Naive thymus-derived CD4-positive, alpha-beta T cell (primary cell): ENCODE measurements at regions of chr11 and their contacts with region 1.

Region 1: DNA sequence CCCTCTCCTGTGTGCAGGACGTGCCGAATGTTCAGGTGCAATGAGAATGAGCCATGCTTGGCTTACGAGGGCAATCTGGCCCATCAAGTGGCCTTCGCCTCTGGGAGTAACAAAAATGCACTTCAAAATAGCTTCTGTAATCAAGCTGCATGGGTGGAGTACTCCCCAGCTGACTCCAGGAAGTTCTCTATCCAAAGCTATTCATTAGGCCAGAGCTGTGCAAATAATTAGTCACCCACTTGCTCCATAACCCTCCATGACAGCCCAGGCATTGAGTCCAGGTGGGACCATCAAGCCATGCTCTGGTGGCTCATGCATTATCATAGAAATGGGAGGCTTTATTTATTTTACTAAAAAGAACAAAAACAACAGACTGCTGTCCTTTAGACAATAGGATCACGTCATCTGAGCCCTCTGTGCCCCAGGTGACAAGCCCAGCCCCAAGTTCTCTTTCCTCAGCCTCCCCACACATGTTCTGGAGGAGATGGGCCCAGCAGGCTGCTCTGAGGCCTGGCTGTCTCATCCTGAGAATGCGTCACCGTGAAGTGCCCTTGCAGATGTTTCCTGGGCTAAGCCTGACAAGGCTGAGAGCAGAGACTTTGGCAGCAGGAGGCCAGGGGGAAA is 244.7 kb downstream of the ETS1 start:
- DNase-seq: peak in 5 of 9 donors; percentile 46 to 77 (median 63)
- ATAC-seq: peak; percentile 54
- H3K4me3 ChIP-seq: peak overlapping the region; percentile 57
- H3K4me3 Mint-ChIP-seq: peak overlapping the region; percentile 74 to 90 (median 84)
- H3K27ac ChIP-seq: peak overlapping the region; percentile 93
- H3K27ac Mint-ChIP-seq: peak overlapping the region; percentile 97 to 99 (median 99)
- H3K4me1 ChIP-seq: peaks cover 50 to 64% of the 10 kb centered on the region in 2 donors
- H3K4me1 Mint-ChIP-seq: peaks cover 52 to 99% (median 94%) of the 10 kb centered on the region in 7 donors
- H3K27me3 ChIP-seq: no peaks in the 10 kb centered on the region
- H3K27me3 Mint-ChIP-seq: no peaks in the 10 kb centered on the region

Region 2: GRCh38 chr11:127693686-127694085 is 648.9 kb before region 1 on chr11:
- CTCF ChIA-PET with region 1: no interaction called
- POLR2A ChIA-PET with region 1: no interaction called
- intact Hi-C with region 1: no loop called
- DNase-seq: no peak
- ATAC-seq: no peak
- H3K4me3 ChIP-seq: no peak overlapping the region
- H3K4me3 Mint-ChIP-seq: no peak overlapping the region
- H3K27ac ChIP-seq: no peak overlapping the region
- H3K27ac Mint-ChIP-seq: no peak overlapping the region
- H3K4me1 ChIP-seq: no peaks in the 10 kb centered on the region
- H3K4me1 Mint-ChIP-seq: no peaks in the 10 kb centered on the region
- H3K27me3 ChIP-seq: no peaks in the 10 kb centered on the region
- H3K27me3 Mint-ChIP-seq: peaks cover 0 to under 1% (median 0%) of the 10 kb centered on the region in 5 donors

Region 3: GRCh38 chr11:128222245-128222884 is 120.3 kb before region 1 on chr11:
- CTCF ChIA-PET with region 1: no interaction called
- POLR2A ChIA-PET with region 1: no interaction called
- intact Hi-C with region 1: no loop called
- DNase-seq: no peak
- ATAC-seq: no peak
- H3K4me3 ChIP-seq: no peak overlapping the region
- H3K4me3 Mint-ChIP-seq: no peak overlapping the region
- H3K27ac ChIP-seq: no peak overlapping the region
- H3K27ac Mint-ChIP-seq: no peak overlapping the region
- H3K4me1 ChIP-seq: no peaks in the 10 kb centered on the region
- H3K4me1 Mint-ChIP-seq: peaks cover 0 to 27% (median 8%) of the 10 kb centered on the region in 7 donors
- H3K27me3 ChIP-seq: no peaks in the 10 kb centered on the region
- H3K27me3 Mint-ChIP-seq: no peaks in the 10 kb centered on the region

Region 4: DNA sequence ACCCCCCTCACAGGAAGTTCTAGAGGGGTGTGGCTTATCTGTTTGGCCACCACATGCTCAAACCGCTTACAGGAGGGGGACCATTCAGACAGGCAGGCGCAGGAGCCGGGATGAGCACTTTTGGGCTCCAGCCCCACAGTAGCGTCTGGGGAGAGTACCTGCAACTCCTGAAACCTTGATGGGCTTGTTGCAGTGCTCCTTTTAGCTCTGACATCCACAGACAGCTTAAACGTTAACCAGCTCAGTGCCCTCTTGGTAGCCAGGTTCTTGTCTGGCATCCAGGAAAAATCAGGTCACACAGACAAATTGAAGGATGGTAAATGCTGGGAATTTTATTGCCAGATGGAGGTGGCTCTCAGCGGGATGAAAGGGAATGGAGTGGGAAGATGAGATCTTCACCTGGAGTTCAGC is 81.6 kb before region 1 on chr11:
- CTCF ChIA-PET with region 1: no interaction called
- POLR2A ChIA-PET with region 1: no interaction called
- intact Hi-C with region 1: no loop called
- DNase-seq: no peak
- ATAC-seq: no peak
- H3K4me3 ChIP-seq: no peak overlapping the region
- H3K4me3 Mint-ChIP-seq: no peak overlapping the region
- H3K27ac ChIP-seq: no peak overlapping the region
- H3K27ac Mint-ChIP-seq: no peak overlapping the region
- H3K4me1 ChIP-seq: no peaks in the 10 kb centered on the region
- H3K4me1 Mint-ChIP-seq: peaks cover 0 to 8% (median 0%) of the 10 kb centered on the region in 7 donors
- H3K27me3 ChIP-seq: no peaks in the 10 kb centered on the region
- H3K27me3 Mint-ChIP-seq: peaks cover 0 to 13% (median 0%) of the 10 kb centered on the region in 5 donors

Region 5: DNA sequence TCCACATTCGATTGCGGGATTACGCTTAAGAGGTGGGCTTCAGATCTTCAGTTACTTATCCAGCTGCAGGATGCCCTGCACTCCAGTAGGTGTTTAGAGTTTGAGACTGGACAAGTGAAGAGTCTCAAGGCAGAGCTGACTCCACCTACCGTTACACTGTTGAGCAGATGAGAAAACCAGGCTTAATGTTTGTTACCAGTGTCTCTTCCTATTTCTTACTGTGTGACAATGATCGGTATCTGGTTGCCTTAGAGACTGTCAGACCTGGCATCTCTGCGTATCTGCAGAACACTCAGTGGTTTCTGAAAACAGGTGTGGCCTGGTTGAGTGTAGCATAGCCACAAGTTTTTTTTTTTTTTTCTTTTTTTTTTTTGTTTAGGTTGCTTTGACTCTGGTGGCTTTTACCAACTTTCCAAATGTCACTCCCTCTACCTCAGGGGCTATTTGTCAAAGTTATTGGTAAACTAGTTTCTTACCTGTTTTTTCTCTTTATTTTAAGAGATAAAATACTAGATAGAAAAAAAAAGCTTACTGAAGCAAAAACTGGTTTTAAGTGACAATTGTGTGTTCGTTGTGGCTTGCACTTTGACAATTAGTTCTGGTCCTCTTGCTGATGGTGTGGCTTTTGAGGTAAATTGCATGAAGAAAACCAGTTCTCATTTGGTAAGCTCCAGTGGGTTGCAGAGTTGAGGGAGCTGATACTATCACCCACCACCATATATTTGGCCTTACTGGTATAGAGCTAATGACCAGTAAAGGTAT is 40.0 kb before region 1 on chr11:
- CTCF ChIA-PET with region 1: no interaction called
- POLR2A ChIA-PET with region 1: interaction called, 18 read pairs
- intact Hi-C with region 1: loop called (anchors 1 kb)
- DNase-seq: peak; percentile 39 to 97 (median 92)
- ATAC-seq: peak; percentile 92
- H3K4me3 ChIP-seq: peak overlapping the region; percentile 52
- H3K4me3 Mint-ChIP-seq: peak overlapping the region; percentile 81 to 98 (median 93)
- H3K27ac ChIP-seq: peak overlapping the region; percentile 98
- H3K27ac Mint-ChIP-seq: peak overlapping the region; percentile 93 to 100 (median 98)
- H3K4me1 ChIP-seq: peaks cover 83 to 95% of the 10 kb centered on the region in 2 donors
- H3K4me1 Mint-ChIP-seq: peaks cover 52 to 92% (median 88%) of the 10 kb centered on the region in 7 donors
- H3K27me3 ChIP-seq: no peaks in the 10 kb centered on the region
- H3K27me3 Mint-ChIP-seq: no peaks in the 10 kb centered on the region

Region 6: DNA sequence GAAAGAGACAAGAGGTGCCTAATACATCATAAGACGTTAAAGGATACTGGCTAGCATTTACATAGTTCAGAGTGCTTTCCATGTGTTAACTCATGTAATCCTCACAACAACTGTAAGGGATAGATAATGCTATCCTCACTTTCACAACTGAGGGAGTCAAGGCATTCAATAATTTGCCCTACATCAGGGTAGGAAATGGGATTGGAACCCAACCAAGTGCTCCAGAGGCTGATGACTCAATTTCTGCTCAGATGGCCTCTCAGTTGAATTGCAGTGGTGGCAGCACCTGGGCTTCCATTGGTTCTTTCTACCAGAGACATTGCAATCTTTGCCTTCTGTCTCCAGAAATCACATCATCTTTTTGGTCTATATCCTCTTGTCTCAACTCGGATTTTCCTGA is 11.9 kb after region 1 on chr11:
- CTCF ChIA-PET with region 1: interaction called, 5 read pairs
- POLR2A ChIA-PET with region 1: interaction called, 22 read pairs
- intact Hi-C with region 1: loop called in 1 of 2 experiments (anchors 1 kb)
- DNase-seq: no peak
- ATAC-seq: no peak
- H3K4me3 ChIP-seq: no peak overlapping the region
- H3K4me3 Mint-ChIP-seq: no peak overlapping the region
- H3K27ac ChIP-seq: no peak overlapping the region
- H3K27ac Mint-ChIP-seq: no peak overlapping the region
- H3K4me1 ChIP-seq: peaks cover 9 to 29% of the 10 kb centered on the region in 2 donors
- H3K4me1 Mint-ChIP-seq: peaks cover 18 to 78% (median 67%) of the 10 kb centered on the region in 7 donors
- H3K27me3 ChIP-seq: no peaks in the 10 kb centered on the region
- H3K27me3 Mint-ChIP-seq: peaks cover 0 to 4% (median 0%) of the 10 kb centered on the region in 5 donors

Region 7: DNA sequence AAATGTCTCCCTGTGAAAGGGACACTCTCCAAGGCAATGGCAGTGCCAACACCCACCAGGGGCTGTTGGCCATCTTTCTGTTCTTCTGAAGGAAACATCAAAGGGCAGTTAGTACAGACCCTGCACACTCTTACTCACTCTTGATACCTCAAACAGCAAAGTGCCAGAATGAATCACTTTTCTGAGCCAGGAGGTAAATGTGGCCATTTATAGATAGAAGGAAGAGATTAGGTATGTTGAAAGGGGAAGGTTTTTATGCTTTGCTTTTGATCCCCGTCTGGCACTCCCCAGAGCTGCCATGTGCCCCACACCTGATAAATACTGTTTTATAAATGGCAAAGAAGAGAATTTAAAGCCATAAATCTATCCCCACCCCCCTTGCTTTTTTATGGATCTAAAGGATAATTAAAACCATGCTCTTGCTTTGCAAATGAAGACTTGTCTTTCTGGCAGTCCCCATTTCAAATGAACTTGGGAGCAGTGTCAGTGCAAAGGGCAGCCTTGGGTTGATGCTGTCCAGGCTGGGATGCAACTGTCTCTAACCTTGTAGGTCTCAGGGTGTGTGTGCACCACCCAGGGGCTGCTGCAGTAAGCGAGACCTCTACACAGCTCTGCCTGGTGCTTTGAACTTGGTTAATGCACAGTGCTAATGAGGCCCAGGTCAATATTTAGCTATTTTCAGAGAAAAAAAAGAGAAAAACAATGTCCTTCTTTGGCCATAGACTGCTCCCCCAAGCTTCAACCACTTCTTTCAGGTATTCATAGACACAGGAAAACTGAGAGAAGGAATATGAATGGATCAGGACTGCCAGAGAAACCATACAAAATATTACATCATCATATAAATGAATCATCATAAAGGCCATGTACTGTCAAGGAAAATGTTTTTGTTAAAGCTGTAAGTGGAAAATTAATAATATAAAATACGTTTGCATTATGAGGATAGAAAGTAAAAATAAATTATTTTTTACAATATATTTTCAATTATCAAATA is 37.3 kb after region 1 on chr11:
- CTCF ChIA-PET with region 1: no interaction called
- POLR2A ChIA-PET with region 1: interaction called, 4 read pairs
- intact Hi-C with region 1: loop called in 1 of 2 experiments (anchors 5 kb)
- DNase-seq: peak in 7 of 9 donors; percentile 2 to 32 (median 25)
- ATAC-seq: peak; percentile 80
- H3K4me3 ChIP-seq: no peak overlapping the region
- H3K4me3 Mint-ChIP-seq: peak overlapping the region in 6 of 10 donors; percentile 10 to 39 (median 14)
- H3K27ac ChIP-seq: no peak overlapping the region
- H3K27ac Mint-ChIP-seq: peak overlapping the region in 7 of 9 donors; percentile 10 to 79 (median 23)
- H3K4me1 ChIP-seq: peaks cover 0 to 18% of the 10 kb centered on the region in 2 donors
- H3K4me1 Mint-ChIP-seq: peaks cover 4 to 62% (median 45%) of the 10 kb centered on the region in 7 donors
- H3K27me3 ChIP-seq: no peaks in the 10 kb centered on the region
- H3K27me3 Mint-ChIP-seq: no peaks in the 10 kb centered on the region

Region 8: DNA sequence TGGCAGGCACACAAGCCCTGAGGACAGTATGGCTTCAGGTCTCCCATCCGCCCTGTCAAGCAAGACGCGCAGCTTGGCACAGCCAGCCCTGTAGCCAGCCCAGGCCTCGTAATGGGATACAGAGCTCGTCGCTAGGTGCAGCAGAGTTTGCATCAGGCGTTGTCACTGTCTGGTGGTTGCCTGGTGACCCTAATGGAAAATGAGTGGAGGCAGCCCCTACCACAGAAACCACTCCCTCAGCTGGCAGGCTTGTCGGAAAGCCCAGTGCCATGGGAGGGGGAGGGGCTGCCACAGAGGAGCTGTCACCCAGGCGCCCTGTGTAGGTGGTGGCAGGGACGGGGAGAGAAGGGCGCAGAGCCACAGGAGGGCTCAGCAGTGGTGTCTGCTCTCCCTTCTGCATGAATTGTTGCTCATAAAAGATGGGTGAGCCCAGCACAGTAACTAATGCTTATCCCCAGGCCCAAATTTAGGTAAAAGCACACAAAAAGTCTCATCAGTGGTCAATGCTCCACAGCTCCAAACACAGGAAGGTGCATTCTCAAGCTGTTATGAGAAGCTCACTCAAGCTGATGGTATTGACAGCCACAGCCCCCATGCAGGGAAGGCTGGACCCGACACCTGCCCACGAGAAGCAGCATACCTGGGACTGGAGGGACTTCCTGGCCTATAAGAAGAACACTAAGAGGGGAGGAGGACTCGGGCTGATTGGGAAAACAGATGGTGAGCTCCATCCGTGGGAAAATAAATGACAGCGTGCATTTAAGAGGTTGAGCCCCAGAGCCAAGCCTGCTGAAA is 80.2 kb after region 1 on chr11:
- CTCF ChIA-PET with region 1: no interaction called
- POLR2A ChIA-PET with region 1: interaction called, 4 read pairs
- intact Hi-C with region 1: loop called (anchors 2 to 5 kb)
- DNase-seq: peak; percentile 67 to 94 (median 82)
- ATAC-seq: peak; percentile 96
- H3K4me3 ChIP-seq: peak overlapping the region; percentile 25
- H3K4me3 Mint-ChIP-seq: peak overlapping the region; percentile 50 to 86 (median 68)
- H3K27ac ChIP-seq: peak overlapping the region; percentile 56
- H3K27ac Mint-ChIP-seq: peak overlapping the region; percentile 86 to 98 (median 94)
- H3K4me1 ChIP-seq: peaks cover 17 to 33% of the 10 kb centered on the region in 2 donors
- H3K4me1 Mint-ChIP-seq: peaks cover 30 to 86% (median 66%) of the 10 kb centered on the region in 7 donors
- H3K27me3 ChIP-seq: no peaks in the 10 kb centered on the region
- H3K27me3 Mint-ChIP-seq: no peaks in the 10 kb centered on the region